PC-9 (cell line): ENCODE measurements at regions of chr5 and their contacts with region 1.

Region 1: GRCh38 chr5:16552666-16553343 is 64.0 kb downstream of the RETREG1 start:
- DNase-seq: peak; percentile 68 to 87
- H3K4me3 ChIP-seq: no peak overlapping the region
- H3K27ac ChIP-seq: no peak overlapping the region
- H3K4me1 ChIP-seq: no peaks in the 10 kb centered on the region
- H3K27me3 ChIP-seq: no peaks in the 10 kb centered on the region
- CTCF ChIP-seq: peak; percentile 86

Region 2: GRCh38 chr5:16160706-16161105 is 392.1 kb before region 1 on chr5:
- CTCF ChIA-PET with region 1: no interaction called
- POLR2A ChIA-PET with region 1: no interaction called
- intact Hi-C with region 1: loop called (anchors 2 kb)
- DNase-seq: peak; percentile 35 to 51
- H3K4me3 ChIP-seq: no peak overlapping the region
- H3K27ac ChIP-seq: no peak overlapping the region
- H3K4me1 ChIP-seq: no peaks in the 10 kb centered on the region
- H3K27me3 ChIP-seq: no peaks in the 10 kb centered on the region
- CTCF ChIP-seq: peak; percentile 80

Region 3: DNA sequence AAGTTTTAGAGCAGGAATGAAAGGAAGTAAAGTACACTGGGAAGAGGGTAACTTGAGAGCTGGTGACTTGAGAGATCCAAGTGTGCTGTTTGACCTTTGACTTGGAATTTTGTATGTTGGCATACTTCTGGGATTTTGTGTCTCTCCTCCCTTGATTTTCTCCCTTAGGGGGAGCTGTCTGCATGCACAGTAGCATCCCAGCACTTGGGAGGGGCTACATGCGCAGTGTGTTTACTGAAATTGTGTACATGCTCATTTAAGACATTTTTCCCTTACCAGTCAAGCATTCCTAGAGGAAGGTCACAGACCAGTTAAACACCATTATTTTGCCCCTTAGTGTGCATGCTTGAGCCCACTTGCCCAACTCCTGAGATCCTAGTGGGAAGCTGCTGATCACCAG is 207.4 kb before region 1 on chr5:
- CTCF ChIA-PET with region 1: no interaction called
- POLR2A ChIA-PET with region 1: no interaction called
- intact Hi-C with region 1: loop called (anchors 5 kb)
- DNase-seq: no peak
- H3K4me3 ChIP-seq: no peak overlapping the region
- H3K27ac ChIP-seq: no peak overlapping the region
- H3K4me1 ChIP-seq: no peaks in the 10 kb centered on the region
- H3K27me3 ChIP-seq: 0 out of 2 replicates have a peak, but pooled peaks cover 4% of the 10 kb centered on the region
- CTCF ChIP-seq: no peak

Region 4: DNA sequence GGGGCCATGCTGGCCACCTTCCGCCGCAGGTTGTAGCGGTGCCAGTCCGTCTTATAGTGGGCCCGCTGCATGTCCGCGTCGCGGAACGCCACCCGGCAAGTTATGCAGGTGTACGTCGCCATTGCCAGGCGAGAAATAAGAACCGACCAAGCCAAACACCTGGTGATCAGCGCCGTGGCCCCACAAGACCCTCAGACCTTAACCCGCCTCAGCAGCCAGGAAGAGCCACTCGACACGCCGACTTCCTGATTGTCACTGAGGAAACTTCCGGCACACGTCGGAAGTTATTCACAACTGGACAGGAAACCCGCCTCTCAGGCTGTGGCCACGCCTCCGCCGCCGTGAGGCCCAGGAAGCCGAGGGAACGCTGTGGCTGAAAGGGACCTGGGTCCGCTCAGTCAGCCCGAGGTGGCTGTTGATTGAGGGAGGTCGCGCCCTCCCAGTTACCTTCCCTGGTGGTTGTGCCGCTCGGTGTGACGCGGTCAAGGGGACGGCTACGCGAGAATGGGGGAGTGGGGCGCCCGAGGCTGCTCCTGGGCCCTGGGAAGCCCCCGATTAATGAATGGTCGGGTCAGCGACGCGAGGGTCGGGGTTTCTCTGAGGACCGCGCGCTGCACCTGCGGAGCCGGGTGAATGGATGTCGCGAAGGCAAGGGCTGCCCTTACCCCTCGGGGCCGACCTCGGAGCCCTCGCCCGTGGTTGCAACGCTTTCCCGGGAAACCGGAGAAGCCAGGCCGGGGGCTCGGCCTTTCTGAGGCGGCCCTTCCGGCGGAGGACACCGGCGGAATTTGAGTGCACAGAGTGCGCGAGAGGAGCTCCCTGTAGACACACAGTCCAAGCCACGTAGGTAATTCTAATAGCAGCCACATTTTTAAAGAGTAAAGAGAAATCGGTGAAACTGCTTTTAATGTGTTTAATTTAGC is 87.0 kb before region 1 on chr5 and contains the start of gene ZNF622:
- CTCF ChIA-PET with region 1: no interaction called
- POLR2A ChIA-PET with region 1: no interaction called
- intact Hi-C with region 1: loop called (anchors 1 kb)
- DNase-seq: peak; percentile 89 to 97
- H3K4me3 ChIP-seq: peak within 1 kb of the TSS; percentile 93
- H3K27ac ChIP-seq: peak within 1 kb of the TSS; percentile 50
- H3K4me1 ChIP-seq: peaks cover 36% of the 10 kb centered on the region
- H3K27me3 ChIP-seq: no peaks in the 10 kb centered on the region
- CTCF ChIP-seq: no peak
- total RNA-seq, gene ZNF622: 54.4 and 73.5 TPM in 2 replicates

Region 5: GRCh38 chr5:16600397-16600796 is 47.6 kb after region 1 on chr5:
- CTCF ChIA-PET with region 1: no interaction called
- POLR2A ChIA-PET with region 1: no interaction called
- intact Hi-C with region 1: no loop called
- DNase-seq: no peak
- H3K4me3 ChIP-seq: no peak overlapping the region
- H3K27ac ChIP-seq: no peak overlapping the region
- H3K4me1 ChIP-seq: no peaks in the 10 kb centered on the region
- H3K27me3 ChIP-seq: peaks cover 27% of the 10 kb centered on the region; the same call in 1 of the 2 replicates
- CTCF ChIP-seq: no peak

Region 6: GRCh38 chr5:16666883-16667398 is 114.1 kb after region 1 on chr5:
- CTCF ChIA-PET with region 1: interaction called, 3 read pairs
- POLR2A ChIA-PET with region 1: no interaction called
- intact Hi-C with region 1: loop called (anchors 5 kb)
- DNase-seq: peak in 1 of 2 experiments; percentile 41
- H3K4me3 ChIP-seq: no peak overlapping the region
- H3K27ac ChIP-seq: no peak overlapping the region
- H3K4me1 ChIP-seq: no peaks in the 10 kb centered on the region
- H3K27me3 ChIP-seq: no peaks in the 10 kb centered on the region
- CTCF ChIP-seq: peak; percentile 62

Region 7: DNA sequence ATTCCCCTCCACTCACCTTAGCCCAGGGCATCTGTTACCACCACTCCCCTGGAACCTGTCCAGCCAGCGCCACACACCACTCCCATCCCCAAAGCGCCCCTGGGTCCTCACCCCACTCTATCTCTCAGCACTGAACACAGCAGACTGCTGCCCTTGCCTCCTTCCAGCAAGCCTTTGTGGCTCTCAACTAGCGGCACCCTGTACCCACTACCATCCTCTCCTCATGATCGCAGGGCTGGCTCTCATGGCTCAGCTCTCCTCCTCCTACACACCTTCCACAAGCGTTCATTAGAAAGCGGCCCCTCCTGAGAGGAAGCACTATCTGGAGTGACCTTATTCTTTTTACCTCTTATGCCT is 651.3 kb after region 1 on chr5:
- CTCF ChIA-PET with region 1: interaction called, 5 read pairs
- POLR2A ChIA-PET with region 1: no interaction called
- intact Hi-C with region 1: loop called (anchors 2 kb)
- DNase-seq: no peak
- H3K4me3 ChIP-seq: no peak overlapping the region
- H3K27ac ChIP-seq: no peak overlapping the region
- H3K4me1 ChIP-seq: no peaks in the 10 kb centered on the region
- H3K27me3 ChIP-seq: no peaks in the 10 kb centered on the region
- CTCF ChIP-seq: no peak